ENCODE measurements at regions of chr12 and their contacts with region 1.

Region 1: GRCh38 chr12:115383669-115384068 is 699.7 kb upstream of the TBX3 start:
- DNase-seq: peak; percentile 97
- H3K4me3 Mint-ChIP-seq: peak overlapping the region; percentile 21
- H3K27ac Mint-ChIP-seq: peak overlapping the region; percentile 75
- H3K4me1 Mint-ChIP-seq: peaks cover 15% of the 10 kb centered on the region
- H3K27me3 Mint-ChIP-seq: no peaks in the 10 kb centered on the region
- CTCF ChIP-seq: no peak

Region 2: DNA sequence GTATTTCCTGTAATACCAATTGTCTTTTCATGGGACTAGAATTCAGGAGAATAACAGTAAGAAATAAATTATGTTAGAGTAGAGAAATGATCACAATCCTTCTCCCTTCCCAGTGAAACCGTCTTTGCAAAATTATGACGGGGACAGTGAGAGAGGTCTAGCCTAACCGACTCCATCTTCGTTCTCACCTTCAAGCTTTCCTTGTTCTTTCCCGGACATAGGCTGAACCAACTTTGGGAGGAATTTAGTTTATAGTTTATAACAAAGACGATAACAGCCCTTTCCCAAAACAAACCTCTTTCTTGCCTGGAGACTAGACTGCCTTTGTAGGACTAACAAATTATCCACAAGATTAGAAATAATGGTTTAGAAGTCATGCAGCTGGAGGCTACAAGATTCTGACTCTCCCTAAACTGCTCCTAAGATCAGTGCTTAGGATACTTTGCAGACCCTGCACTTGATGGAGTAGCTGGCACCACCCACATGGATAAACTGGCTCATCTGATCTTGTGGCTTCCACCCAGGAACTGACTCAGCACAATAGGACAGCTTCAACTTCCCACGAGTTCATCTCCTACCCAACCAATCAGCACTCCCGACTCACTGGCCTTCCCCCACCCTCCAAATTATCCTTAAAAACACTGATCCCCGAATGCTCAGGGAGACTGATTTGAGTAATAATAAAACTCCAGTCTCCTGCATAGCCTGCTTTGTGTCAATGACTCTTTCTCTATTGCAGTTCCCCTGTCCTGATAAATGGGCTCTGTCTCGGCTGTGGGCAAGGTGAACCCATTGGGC is 178.5 kb before region 1 on chr12:
- CTCF ChIA-PET with region 1: no interaction called
- POLR2A ChIA-PET with region 1: no interaction called
- intact Hi-C with region 1: no loop called
- DNase-seq: peak; percentile 51
- H3K4me3 Mint-ChIP-seq: no peak overlapping the region
- H3K27ac Mint-ChIP-seq: no peak overlapping the region
- H3K4me1 Mint-ChIP-seq: peaks cover 5% of the 10 kb centered on the region
- H3K27me3 Mint-ChIP-seq: no peaks in the 10 kb centered on the region
- CTCF ChIP-seq: no peak

Region 3: DNA sequence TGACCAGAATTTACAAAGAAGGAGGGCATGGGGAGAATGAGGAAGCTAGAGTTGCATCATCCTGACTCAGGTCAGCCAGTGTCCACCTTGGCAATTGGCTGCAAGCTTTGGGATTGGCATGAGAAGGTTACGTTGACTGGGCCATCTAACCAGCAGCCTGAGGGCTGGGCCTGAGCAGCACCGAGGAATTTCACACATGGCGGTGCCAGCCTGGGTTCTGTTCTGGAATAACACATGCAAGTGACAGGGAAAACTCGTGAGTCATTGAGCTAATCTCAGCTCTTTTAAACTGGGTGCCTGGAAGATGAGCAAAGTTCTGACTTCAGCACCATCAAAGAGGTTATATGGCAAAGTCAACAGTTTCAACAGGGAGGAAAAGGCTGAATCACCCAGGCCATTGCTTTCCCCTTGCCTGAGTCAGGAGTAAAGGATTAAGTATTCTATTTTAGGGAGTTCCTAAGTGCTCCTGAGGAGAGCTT is 156.5 kb before region 1 on chr12:
- CTCF ChIA-PET with region 1: interaction called, 3 read pairs
- POLR2A ChIA-PET with region 1: interaction called, 10 read pairs
- intact Hi-C with region 1: loop called (anchors 10 kb)
- DNase-seq: peak; percentile 84
- H3K4me3 Mint-ChIP-seq: no peak overlapping the region
- H3K27ac Mint-ChIP-seq: no peak overlapping the region
- H3K4me1 Mint-ChIP-seq: peaks cover 11% of the 10 kb centered on the region
- H3K27me3 Mint-ChIP-seq: no peaks in the 10 kb centered on the region
- CTCF ChIP-seq: no peak

Region 4: DNA sequence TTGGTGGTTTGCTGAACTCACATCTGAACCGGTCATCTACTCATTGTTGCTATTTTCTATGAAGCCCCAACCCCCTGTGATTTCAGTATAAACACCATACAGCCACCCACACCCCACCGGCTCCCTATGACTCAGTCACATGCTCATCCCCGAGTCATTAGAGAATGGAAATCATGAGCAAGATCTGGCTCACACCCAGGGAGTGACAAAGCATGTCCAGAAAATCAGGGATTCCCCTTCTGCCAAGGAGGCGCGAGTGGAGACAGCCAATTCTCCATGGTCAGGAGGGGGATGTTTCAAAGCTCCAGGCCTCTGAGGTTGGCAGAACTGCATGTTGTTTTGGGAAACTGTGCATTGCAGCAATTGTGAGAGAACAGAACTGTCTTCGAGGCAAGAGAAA is 42.2 kb before region 1 on chr12:
- CTCF ChIA-PET with region 1: interaction called, 4 read pairs
- POLR2A ChIA-PET with region 1: interaction called, 6 read pairs
- intact Hi-C with region 1: loop called (anchors 5 kb)
- DNase-seq: peak; percentile 99
- H3K4me3 Mint-ChIP-seq: peak overlapping the region; percentile 31
- H3K27ac Mint-ChIP-seq: peak overlapping the region; percentile 94
- H3K4me1 Mint-ChIP-seq: peaks cover 21% of the 10 kb centered on the region
- H3K27me3 Mint-ChIP-seq: no peaks in the 10 kb centered on the region
- CTCF ChIP-seq: no peak

Region 5: GRCh38 chr12:115354007-115354452 is 29.6 kb before region 1 on chr12:
- CTCF ChIA-PET with region 1: no interaction called
- POLR2A ChIA-PET with region 1: interaction called, 26 read pairs
- intact Hi-C with region 1: loop called (anchors 1 kb)
- DNase-seq: peak; percentile 98
- H3K4me3 Mint-ChIP-seq: peak overlapping the region; percentile 84
- H3K27ac Mint-ChIP-seq: peak overlapping the region; percentile 99
- H3K4me1 Mint-ChIP-seq: peaks cover 42% of the 10 kb centered on the region
- H3K27me3 Mint-ChIP-seq: no peaks in the 10 kb centered on the region
- CTCF ChIP-seq: no peak